ENCODE measurements at regions of chr6 and their contacts with region 1.

Region 1: GRCh38 chr6:143427109-143427817 is 23.2 kb downstream of the ADAT2 start:
- DNase-seq: peak; percentile 57 to 69 (median 64)
- ATAC-seq: peak; percentile 79
- H3K4me3 ChIP-seq: no peak overlapping the region
- H3K27ac ChIP-seq: no peak overlapping the region
- H3K4me1 ChIP-seq: no peaks in the 10 kb centered on the region
- H3K27me3 ChIP-seq: no peaks in the 10 kb centered on the region
- CTCF ChIP-seq: peak; percentile 24 to 89 (median 70)
- POLR2A ChIP-seq: no peak

Region 2: DNA sequence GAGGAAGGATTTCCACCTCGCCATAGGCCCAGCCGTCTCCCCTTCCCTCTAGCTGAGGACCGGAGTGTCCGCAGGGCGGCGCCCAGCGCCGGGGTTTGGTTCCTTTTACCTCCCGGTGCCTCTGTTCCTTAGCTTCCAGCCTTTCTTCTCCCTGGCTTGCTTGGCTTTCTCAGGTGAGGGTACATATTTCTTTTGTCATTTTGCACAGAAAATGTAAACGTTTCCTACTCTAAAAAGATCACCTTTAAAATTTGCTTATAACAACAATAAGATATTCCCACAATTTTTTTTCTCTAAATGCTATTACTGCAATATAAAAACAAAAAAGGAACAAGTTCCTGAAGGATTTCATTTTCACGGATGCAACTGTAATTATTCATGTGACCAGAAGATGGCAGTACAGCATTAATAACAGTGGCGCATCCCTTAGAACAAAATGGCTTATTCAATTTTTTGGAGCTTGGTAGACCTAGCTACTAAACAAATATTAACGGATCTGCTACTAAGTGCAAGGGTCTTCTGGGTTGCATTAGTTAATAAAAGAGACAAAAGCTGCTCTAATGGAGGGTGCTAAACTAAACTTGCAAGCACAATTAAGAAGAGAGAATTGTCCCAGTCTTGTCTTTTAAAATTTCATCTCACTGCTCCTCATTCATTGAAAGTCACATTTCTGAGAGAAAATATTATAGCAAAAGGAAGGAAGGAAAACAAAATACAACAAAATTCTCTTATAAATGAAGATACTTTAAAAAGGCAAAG is 952.6 kb before region 1 on chr6:
- intact Hi-C with region 1: loop called (anchors 10 kb)
- DNase-seq: peak in 3 of 4 donors; percentile 12 to 23 (median 19)
- ATAC-seq: no peak
- H3K4me3 ChIP-seq: no peak overlapping the region
- H3K27ac ChIP-seq: no peak overlapping the region
- H3K4me1 ChIP-seq: no peaks in the 10 kb centered on the region
- H3K27me3 ChIP-seq: no peaks in the 10 kb centered on the region
- CTCF ChIP-seq: peak; percentile 22 to 94 (median 80)
- POLR2A ChIP-seq: no peak

Region 3: DNA sequence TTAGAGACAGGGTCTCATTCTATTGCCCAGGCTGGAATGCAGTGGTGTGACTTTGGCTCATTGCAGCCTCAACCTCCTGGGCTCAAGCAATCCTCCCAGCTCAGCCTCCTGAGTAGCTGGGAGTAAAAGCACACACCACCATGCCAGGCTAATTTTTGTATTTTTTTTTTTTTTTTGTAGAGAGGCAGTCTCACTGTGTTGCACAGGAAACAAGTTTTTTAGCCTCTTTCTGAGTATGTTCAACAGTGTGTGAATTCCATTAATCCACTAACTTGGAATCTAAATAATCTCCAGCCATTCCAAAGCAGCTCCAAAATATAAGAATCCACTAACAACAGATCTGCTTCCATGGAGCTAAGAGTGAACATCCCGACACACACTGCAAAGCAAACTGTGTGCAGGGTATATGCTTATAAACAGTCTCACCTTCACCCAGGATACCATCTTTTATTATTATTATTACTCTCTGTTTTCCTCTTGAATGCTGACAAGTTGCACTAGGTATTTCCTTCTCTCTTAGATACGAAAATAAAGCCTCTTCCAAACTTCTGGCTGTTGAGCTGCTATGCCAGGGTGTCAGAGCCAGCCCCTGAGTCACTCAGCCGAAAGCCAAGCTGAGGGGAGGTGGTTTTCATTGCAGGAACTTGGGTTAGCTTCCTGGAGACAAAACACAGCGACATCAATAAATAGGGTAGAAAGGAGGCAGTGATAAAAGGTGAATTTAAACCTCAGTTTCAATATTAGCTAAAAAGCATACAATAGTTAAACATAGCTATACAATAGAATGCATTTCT is 747.2 kb before region 1 on chr6:
- intact Hi-C with region 1: loop called (anchors 10 kb)
- DNase-seq: no peak
- ATAC-seq: no peak
- H3K4me3 ChIP-seq: no peak overlapping the region
- H3K27ac ChIP-seq: no peak overlapping the region
- H3K4me1 ChIP-seq: no peaks in the 10 kb centered on the region
- H3K27me3 ChIP-seq: peaks cover 0 to 8% of the 10 kb centered on the region in 2 donors
- CTCF ChIP-seq: no peak
- POLR2A ChIP-seq: no peak

Region 4: GRCh38 chr6:143999406-143999805 is 572.1 kb after region 1 on chr6:
- intact Hi-C with region 1: no loop called
- DNase-seq: no peak
- ATAC-seq: no peak
- H3K4me3 ChIP-seq: no peak overlapping the region
- H3K27ac ChIP-seq: no peak overlapping the region
- H3K4me1 ChIP-seq: no peaks in the 10 kb centered on the region
- H3K27me3 ChIP-seq: no peaks in the 10 kb centered on the region
- CTCF ChIP-seq: no peak
- POLR2A ChIP-seq: no peak